CD4-positive, alpha-beta T cell (primary cell): ENCODE measurements at regions of chr16 and their contacts with region 1.

Region 1: DNA sequence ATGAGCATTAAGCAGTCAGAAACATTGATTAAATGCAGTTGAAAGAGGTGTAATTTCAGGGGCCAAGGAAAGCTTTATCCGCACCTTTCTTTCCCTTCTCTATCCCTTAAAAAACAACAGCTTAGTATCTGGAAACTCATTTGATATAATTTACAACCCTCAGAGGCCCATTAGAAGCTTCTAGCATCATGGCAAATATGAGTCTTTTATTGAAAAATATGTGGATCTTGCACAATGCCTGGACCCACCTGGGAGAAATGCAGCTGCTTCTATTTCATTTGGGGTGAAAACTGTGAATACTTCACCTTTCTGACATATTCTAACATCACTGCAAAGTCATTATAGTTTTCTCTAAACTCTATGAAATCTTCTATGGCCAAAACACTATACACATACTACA is 492.2 kb upstream of the PSMD7 start:
- DNase-seq: no peak
- ATAC-seq: no peak
- H3K4me3 ChIP-seq: no peak overlapping the region
- H3K4me3 Mint-ChIP-seq: no peak overlapping the region
- H3K27ac ChIP-seq: no peak overlapping the region
- H3K27ac Mint-ChIP-seq: no peak overlapping the region
- H3K4me1 ChIP-seq: no peaks in the 10 kb centered on the region
- H3K4me1 Mint-ChIP-seq: no peaks in the 10 kb centered on the region
- H3K27me3 ChIP-seq: no peaks in the 10 kb centered on the region
- H3K27me3 Mint-ChIP-seq: no peaks in the 10 kb centered on the region
- CTCF ChIP-seq: no peak

Region 2: GRCh38 chr16:73840728-73841127 is 36.3 kb after region 1 on chr16:
- CTCF ChIA-PET with region 1: no interaction called
- POLR2A ChIA-PET with region 1: no interaction called
- intact Hi-C with region 1: loop called in 1 of 2 experiments (anchors 5 kb)
- DNase-seq: no peak
- ATAC-seq: no peak
- H3K4me3 ChIP-seq: no peak overlapping the region
- H3K4me3 Mint-ChIP-seq: no peak overlapping the region
- H3K27ac ChIP-seq: no peak overlapping the region
- H3K27ac Mint-ChIP-seq: no peak overlapping the region
- H3K4me1 ChIP-seq: no peaks in the 10 kb centered on the region
- H3K4me1 Mint-ChIP-seq: no peaks in the 10 kb centered on the region
- H3K27me3 ChIP-seq: no peaks in the 10 kb centered on the region
- H3K27me3 Mint-ChIP-seq: peaks cover 5% of the 10 kb centered on the region
- CTCF ChIP-seq: no peak